Activated B cell treated with CpG ODN at 0.5 μM for 24 hours (primary cell): ENCODE measurements at regions of chr4 and their contacts with region 1.

Region 1: DNA sequence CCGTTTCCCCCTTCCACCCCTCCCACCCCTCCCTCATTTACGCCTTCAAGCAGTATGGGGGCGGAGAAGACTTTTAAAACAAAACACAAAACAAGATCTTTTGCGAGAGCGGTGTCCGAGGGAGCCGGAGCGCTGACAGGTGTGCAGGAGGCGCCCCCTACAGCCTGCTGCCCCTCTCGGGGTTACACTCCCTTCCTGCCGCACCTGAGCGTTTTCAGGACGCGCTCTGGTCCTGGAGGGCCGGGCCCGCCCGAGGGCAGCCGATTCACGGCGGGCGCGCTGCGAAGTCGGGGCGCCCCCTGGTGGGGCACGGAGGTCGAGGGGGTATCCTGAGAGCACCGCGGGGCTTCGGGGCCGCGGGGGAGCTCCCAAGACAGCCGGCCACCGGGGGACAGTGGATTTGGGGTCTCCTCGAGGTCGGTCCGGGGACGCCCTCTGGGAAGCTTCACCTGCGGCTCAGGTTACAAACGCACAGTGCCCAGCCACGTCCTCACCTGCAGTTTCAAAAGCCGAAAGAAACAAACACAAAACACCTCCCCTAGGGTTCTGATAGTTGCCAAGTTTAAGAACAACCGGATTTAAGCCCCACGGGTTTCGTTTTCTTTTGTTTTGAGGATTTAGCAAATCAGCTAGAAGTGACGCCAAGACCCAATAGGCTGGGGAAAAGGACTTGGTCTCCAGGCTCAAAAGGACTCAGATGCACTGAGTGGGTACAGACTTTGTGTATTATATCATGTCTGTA is 8.0 kb upstream of the NEUROG2 start:
- DNase-seq: peak; percentile 79
- ATAC-seq: peak; percentile 88
- H3K4me3 Mint-ChIP-seq: peak overlapping the region; percentile 88
- H3K27ac Mint-ChIP-seq: no peak overlapping the region
- H3K4me1 Mint-ChIP-seq: peaks cover 32% of the 10 kb centered on the region
- H3K27me3 Mint-ChIP-seq: peaks cover 48% of the 10 kb centered on the region
- CTCF ChIP-seq: peak; percentile 12

Region 2: DNA sequence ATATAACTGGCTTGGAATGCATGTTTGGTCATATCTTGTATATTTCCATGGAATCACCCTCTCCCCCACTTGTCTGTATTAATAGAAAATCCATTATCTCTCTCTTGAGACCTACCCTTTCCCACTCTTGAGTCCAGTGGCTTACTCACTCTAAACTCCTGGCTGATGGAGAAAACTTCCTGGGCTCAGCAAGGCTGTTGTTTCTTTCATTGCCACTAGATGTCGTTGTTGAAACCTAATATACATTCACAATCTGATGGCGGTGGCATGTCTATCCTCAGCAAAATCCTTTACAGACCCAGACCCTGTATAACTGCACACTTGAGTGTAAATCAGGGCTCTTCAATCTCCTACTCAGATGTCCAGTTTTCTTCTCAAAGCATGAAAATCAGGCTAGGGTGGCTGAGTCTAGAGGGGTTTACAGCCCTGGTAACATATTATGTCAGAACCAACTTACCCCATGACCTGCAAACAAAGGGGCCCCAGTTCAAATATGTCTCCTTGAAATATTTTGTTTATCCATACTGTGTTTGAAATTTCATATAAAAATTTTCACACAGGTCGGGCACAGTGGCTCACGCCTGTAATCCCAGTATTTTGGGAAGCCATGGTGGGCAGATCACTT is 448.7 kb before region 1 on chr4:
- CTCF ChIA-PET with region 1: no interaction called
- POLR2A ChIA-PET with region 1: no interaction called
- intact Hi-C with region 1: loop called (anchors 1 kb)
- DNase-seq: no peak
- ATAC-seq: peak; percentile 64
- H3K4me3 Mint-ChIP-seq: no peak overlapping the region
- H3K27ac Mint-ChIP-seq: no peak overlapping the region
- H3K4me1 Mint-ChIP-seq: no peaks in the 10 kb centered on the region
- H3K27me3 Mint-ChIP-seq: peaks cover 2% of the 10 kb centered on the region
- CTCF ChIP-seq: no peak

Region 3: DNA sequence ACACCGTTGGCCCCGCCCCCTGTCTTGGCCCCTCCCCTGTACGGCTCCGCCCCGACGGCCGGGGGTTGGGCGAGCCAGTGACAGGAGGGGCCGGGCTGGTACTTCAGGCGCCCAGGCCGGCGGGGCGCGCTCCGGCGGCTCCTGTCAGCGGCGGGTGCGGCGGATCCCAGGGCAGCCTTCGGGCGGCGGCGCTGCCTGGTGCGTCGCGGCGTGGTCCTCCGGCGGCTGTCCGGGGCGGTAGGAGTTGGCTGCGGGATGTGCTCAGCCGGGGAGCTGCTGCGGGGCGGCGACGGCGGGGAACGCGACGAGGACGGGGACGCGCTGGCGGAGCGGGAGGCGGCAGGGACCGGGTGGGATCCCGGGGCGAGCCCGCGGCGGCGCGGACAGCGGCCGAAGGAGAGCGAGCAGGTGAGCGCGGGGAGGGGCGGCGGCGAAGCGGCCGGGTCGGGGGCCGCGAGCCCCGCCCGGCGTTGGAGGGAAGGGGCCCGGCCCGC is 378.6 kb before region 1 on chr4 and contains the start of gene FAM241A:
- CTCF ChIA-PET with region 1: no interaction called
- POLR2A ChIA-PET with region 1: no interaction called
- intact Hi-C with region 1: loop called (anchors 5 kb)
- DNase-seq: peak; percentile 86
- ATAC-seq: peak; percentile 97
- H3K4me3 Mint-ChIP-seq: peak within 1 kb of the TSS; percentile 97
- H3K27ac Mint-ChIP-seq: peak within 1 kb of the TSS; percentile 80
- H3K4me1 Mint-ChIP-seq: peaks cover 19% of the 10 kb centered on the region
- H3K27me3 Mint-ChIP-seq: peaks cover 5% of the 10 kb centered on the region
- CTCF ChIP-seq: no peak
- total RNA-seq, gene FAM241A: 1.1 and 1.5 TPM in 2 replicates

Region 4: GRCh38 chr4:112199040-112199439 is 324.9 kb before region 1 on chr4:
- CTCF ChIA-PET with region 1: no interaction called
- POLR2A ChIA-PET with region 1: no interaction called
- intact Hi-C with region 1: no loop called
- DNase-seq: no peak
- ATAC-seq: no peak
- H3K4me3 Mint-ChIP-seq: no peak overlapping the region
- H3K27ac Mint-ChIP-seq: no peak overlapping the region
- H3K4me1 Mint-ChIP-seq: no peaks in the 10 kb centered on the region
- H3K27me3 Mint-ChIP-seq: no peaks in the 10 kb centered on the region
- CTCF ChIP-seq: no peak

Region 5: DNA sequence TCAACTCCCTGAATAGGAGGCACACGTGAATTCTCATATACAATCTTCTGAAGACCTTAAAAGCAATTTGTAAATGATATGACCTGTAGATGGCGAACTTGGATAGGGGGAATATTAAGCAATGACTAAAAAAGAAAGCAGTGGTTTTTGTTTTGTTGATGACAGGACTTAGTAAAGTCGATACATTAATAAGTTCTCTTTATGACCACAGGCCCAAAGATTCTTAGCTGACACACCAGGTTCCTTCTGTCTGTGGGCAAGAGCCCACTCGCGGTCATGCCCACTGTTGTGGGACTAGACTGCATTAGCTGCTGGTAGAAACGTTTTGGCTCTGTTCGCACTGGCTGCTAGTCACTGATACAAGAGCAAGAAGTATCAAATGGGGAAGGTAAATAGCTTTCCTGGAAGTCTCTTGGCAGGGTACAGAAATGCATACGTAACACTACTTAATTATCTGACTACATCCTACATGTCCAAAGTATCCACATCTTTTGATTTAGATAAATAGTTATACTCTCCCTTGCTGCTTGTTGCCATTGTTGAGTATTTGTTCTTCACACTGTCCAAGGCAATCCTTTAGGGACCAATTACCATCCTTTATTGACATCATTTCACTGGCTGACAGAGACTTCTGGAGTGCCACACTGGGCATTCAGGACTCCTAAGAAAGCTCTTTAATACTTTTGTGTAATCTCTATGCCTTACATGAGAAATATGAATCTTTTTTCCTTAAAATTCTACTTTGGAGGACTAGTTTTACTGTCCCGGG is 195.8 kb before region 1 on chr4:
- CTCF ChIA-PET with region 1: interaction called, 52 read pairs
- POLR2A ChIA-PET with region 1: interaction called, 4 read pairs
- intact Hi-C with region 1: loop called (anchors 1 kb)
- DNase-seq: no peak
- ATAC-seq: peak; percentile 47
- H3K4me3 Mint-ChIP-seq: peak overlapping the region; percentile 9
- H3K27ac Mint-ChIP-seq: peak overlapping the region; percentile 8
- H3K4me1 Mint-ChIP-seq: no peaks in the 10 kb centered on the region
- H3K27me3 Mint-ChIP-seq: no peaks in the 10 kb centered on the region
- CTCF ChIP-seq: peak; percentile 19

Region 6: DNA sequence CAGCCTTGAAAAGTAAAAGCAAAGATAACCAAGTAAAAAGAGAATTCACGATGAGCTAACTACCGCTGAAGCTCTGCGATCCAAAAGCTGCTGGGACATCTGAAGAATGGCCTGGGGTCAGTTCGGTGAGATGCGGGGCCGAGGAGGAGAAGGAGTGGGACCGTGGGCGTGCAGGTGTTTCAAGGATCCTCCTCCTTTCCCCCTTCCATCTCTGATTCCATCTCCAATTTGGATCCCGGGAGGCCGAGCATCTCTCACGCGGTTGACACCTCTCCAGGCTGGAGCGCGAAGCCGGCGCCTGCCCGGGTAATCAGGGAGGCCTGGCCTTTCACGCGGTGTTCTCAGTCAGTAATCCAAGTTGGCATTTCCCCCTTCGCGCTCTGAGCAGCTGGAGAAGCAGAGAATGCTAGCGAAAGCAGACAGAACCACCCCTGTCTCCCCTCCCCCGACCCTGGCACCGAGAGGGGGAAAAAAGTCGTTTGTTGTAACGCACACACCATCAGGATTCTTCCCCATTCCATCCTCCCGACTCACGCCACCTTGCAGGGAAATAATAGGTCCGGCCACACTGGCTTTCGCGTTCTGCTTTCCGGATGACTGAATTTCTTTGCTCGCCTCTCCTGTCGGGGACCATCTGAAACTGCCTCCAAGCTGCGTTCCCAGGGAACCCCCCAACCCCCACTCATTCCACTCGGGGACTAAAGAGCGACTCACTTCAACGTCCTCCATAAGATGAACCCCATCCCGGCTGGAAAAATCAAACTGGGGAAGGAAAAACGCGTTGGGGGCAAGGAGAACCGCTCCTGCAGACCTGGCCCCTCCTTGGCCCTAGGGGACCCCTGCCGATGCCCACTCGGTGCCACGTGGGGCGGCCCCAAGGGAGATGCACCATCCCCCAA is 14.4 kb before region 1 on chr4:
- CTCF ChIA-PET with region 1: interaction called, 18 read pairs
- POLR2A ChIA-PET with region 1: interaction called, 13 read pairs
- intact Hi-C with region 1: loop called (anchors 2 kb)
- DNase-seq: no peak
- ATAC-seq: no peak
- H3K4me3 Mint-ChIP-seq: peak overlapping the region; percentile 64
- H3K27ac Mint-ChIP-seq: no peak overlapping the region
- H3K4me1 Mint-ChIP-seq: peaks cover 31% of the 10 kb centered on the region
- H3K27me3 Mint-ChIP-seq: peaks cover 73% of the 10 kb centered on the region
- CTCF ChIP-seq: no peak

Region 7: DNA sequence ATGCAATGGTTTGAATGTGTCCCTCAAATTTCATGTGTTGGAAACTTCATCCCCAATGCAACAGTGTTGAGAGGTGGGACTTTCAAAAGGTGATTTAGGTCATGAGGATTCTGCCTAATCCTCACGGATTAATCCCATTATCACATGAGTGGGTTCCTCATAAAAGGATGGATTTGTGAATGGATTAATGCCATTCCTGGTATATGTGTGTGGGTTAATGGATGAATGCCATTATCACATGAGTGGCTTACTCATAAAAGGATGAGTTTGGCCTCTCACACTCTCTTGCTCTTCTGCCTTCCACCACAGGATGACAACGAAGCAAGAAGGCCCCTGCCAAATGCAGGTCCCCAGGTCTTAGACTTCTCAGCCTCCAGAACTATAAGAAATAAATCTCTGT is 22.5 kb after region 1 on chr4:
- CTCF ChIA-PET with region 1: no interaction called
- POLR2A ChIA-PET with region 1: no interaction called
- intact Hi-C with region 1: no loop called
- DNase-seq: no peak
- ATAC-seq: no peak
- H3K4me3 Mint-ChIP-seq: no peak overlapping the region
- H3K27ac Mint-ChIP-seq: no peak overlapping the region
- H3K4me1 Mint-ChIP-seq: no peaks in the 10 kb centered on the region
- H3K27me3 Mint-ChIP-seq: no peaks in the 10 kb centered on the region
- CTCF ChIP-seq: no peak

Region 8: GRCh38 chr4:112636688-112637551 is 113.0 kb after region 1 on chr4 and contains the starts of genes LARP7 and ZGRF1:
- CTCF ChIA-PET with region 1: no interaction called
- POLR2A ChIA-PET with region 1: no interaction called
- intact Hi-C with region 1: loop called (anchors 2 kb)
- DNase-seq: peak; percentile 91
- ATAC-seq: peak; percentile 89
- H3K4me3 Mint-ChIP-seq: no peak within 1 kb of the TSS
- H3K27ac Mint-ChIP-seq: no peak within 1 kb of the TSS
- H3K4me1 Mint-ChIP-seq: peaks cover 22% of the 10 kb centered on the region
- H3K27me3 Mint-ChIP-seq: no peaks in the 10 kb centered on the region
- CTCF ChIP-seq: peak; percentile 67
- total RNA-seq, gene LARP7: 56.9 and 57.8 TPM in 2 replicates
- total RNA-seq, gene ZGRF1: 12.3 and 13.7 TPM in 2 replicates

Region 9: DNA sequence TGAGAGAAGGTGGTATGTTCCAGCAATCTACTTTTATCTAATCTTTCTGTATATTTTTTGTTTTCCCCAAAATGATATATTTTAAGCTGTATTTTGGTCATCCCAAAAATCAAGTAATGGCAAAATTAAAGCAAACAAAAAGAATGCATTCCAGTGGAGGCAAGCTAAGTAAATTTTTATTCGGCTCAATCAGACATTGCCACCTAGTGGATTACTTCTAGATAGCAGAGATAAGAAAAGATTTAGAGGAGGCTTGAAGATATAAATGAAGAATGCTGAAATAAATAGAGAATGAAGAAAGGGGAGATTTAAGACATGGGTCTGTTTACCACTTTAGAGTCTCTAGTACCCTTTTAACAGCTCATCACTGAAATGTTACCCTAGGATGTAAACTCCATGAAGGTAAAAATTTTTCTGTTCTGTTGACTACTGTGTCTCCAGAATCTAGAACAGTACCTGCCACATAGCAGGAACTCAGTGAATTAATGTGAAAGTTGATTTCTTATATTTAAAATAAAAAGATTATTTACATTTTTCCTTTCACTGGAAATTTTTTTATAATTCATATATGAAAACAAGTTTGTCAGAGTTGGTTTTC is 414.6 kb after region 1 on chr4:
- CTCF ChIA-PET with region 1: no interaction called
- POLR2A ChIA-PET with region 1: no interaction called
- intact Hi-C with region 1: loop called (anchors 5 kb)
- DNase-seq: no peak
- ATAC-seq: no peak
- H3K4me3 Mint-ChIP-seq: no peak overlapping the region
- H3K27ac Mint-ChIP-seq: no peak overlapping the region
- H3K4me1 Mint-ChIP-seq: no peaks in the 10 kb centered on the region
- H3K27me3 Mint-ChIP-seq: peaks cover 4% of the 10 kb centered on the region
- CTCF ChIP-seq: no peak